GM13976 (cell line): ENCODE measurements at regions of chr16 and their contacts with region 1.

Region 1: GRCh38 chr16:782766-783403 is 5.3 kb downstream of the RPUSD1 start:
- DNase-seq: no peak
- CTCF ChIP-seq: no peak

Region 2: GRCh38 chr16:361872-362701 is 420.8 kb before region 1 on chr16:
- in situ Hi-C with region 1: no loop called
- DNase-seq: peak; percentile 88
- CTCF ChIP-seq: peak; percentile 94

Region 3: DNA sequence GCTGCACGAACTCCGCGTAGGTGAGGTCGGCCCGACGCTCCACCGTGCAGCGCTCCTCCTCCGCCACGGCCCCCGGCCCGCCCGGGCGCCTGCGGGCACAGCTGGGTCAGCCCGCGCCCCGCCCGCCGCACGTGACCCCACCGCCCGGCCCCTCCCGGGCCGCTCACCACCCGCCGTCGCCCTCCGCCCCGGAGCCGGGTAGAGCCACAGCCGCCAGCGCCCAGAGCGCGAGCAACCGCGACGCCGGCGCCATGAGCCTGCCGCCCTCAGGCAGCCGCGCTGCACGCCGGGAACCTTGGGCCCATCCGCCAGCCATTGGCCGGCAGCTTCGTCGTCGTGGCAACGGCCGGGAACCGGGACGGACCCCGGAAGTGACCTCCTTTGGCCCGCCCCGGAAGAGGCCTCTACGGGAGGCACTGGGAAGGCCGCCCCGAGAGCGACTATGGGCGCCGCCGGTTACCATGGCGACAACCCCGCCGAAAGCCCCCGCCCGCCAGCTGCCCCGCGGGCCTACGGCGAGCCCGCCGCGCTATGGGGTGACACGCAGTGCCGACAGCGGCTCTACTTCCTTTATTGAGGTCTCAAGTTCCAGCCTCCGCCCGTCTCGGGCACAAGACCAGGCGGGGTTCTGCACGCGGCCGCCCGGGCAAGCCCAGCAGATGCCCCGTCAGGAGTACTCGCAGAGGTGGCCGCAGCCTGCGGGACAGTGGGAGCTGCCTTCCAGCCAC is 98.7 kb before region 1 on chr16 and contains the start of gene JMJD8:
- in situ Hi-C with region 1: no loop called
- DNase-seq: peak; percentile 99
- CTCF ChIP-seq: no peak

Region 4: DNA sequence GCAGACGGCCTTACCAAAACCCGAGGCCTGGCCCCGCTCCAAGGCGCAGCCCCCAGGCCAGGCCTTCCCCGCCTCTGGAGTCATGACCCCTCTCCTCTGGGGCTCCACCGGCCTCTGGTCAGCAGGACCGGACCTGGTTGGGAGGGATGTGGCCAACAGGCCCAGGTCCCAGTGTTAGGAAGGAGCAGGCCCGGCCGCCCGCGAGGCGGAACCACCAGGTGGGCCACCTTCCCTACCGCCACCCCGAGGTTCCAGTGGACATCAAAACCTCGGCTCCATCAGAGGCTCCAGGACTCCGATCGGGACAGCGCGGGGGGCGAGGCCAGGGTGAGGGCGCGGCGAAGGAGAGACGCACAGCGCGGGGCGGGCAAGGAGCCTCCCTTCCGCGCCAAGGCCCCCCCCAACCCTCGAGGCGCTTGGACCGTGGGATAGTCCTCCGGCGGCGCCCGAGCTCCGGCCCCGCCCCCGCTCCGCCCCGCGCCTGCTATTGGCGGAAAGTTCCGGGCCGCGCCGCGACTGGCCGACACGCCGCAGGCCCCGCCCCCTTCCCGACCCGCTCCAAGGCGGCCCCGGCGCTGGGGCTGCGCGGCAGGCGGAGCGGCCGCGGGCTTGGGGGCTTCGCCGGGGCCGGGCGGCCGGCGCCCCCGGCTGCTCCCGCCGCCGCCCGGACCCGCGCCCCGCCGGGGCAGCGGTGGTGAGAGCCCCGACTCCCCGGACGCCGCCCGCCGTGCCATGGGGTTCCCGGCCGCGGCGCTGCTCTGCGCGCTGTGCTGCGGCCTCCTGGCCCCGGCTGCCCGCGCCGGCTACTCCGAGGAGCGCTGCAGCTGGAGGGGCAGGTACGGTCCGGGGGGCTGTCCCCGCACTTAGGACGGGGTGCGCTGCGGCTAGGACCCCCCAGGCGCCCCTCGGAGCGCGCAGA is 68.1 kb before region 1 on chr16 and contains the start of gene METRN:
- in situ Hi-C with region 1: loop called (anchors 5 kb)
- DNase-seq: peak; percentile 94
- CTCF ChIP-seq: no peak